MCF 10A (cell line): ENCODE measurements at regions of chr7 and their contacts with region 1.

Region 1: DNA sequence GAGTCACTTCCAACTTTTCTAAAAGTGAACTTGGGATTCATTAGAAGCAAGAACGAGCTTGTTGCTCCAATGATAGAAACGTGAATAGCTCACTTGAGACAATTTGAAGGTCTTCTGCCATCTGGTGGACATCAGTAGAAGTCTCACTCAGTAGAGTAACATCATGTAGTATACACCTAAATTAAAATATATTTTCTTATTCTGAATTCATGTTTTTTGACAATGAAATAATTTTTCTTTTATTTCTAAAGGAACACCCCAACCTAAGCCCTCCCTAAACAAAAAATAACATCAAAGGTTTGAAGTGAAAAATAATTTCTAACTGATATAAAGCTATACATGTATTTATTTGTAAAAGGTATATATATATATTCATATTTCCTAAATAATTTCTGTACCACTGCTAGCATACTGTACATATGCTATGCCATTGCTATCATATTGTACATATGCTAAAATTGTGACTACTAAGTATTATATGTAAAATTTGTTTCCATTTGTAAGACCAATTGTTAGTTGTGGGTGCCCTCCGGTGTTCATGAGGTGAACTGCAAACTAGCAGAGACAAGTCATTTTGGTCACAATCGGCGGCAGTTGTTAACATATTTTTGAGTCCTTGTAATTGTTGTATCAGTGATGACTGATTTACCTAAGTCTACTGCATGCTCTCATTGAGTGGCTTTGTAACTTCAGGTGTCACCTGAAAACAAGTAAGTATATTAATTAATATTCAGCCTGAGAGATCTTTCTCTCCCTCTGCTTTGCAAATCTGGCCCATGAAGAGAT is 121.9 kb downstream of the PTPRZ1 start:
- DNase-seq: peak; percentile 86
- H3K4me3 Mint-ChIP-seq: no peak overlapping the region
- H3K27ac Mint-ChIP-seq: no peak overlapping the region
- H3K4me1 Mint-ChIP-seq: no peaks in the 10 kb centered on the region
- H3K27me3 Mint-ChIP-seq: no peaks in the 10 kb centered on the region
- CTCF ChIP-seq: peak; percentile 67

Region 2: GRCh38 chr7:120792091-120792860 is 1202.5 kb before region 1 on chr7:
- CTCF ChIA-PET with region 1: no interaction called
- POLR2A ChIA-PET with region 1: no interaction called
- intact Hi-C with region 1: loop called (anchors 10 kb)
- DNase-seq: peak; percentile 76
- H3K4me3 Mint-ChIP-seq: no peak overlapping the region
- H3K27ac Mint-ChIP-seq: no peak overlapping the region
- H3K4me1 Mint-ChIP-seq: peaks cover 11% of the 10 kb centered on the region
- H3K27me3 Mint-ChIP-seq: peaks cover 27% of the 10 kb centered on the region
- CTCF ChIP-seq: peak; percentile 84

Region 3: DNA sequence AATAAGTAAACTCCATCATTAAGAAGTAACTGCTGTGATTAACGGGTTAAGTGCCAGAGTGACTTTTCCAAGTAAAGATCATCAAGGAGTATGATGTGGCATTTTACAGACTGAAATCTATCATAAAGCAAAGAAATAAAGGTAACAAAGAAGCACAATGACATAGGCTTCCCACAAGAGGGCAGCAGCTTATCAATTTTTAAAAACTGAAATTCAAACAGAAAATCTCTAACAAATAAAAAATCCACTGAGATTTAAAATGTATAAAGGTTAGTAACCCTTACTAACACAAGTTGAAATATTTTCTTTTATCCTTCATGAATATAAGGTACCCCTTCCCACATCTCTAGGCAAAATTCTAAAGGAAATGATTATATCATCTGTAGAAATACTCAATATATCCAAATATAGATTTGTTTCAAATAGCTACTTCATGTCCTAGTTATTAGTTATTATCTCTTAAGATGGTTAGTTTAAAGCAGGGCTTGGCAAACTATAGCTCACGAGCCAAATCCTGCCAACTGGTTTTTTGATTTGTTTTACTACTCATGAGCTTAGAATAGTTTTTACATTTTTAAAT is 627.9 kb before region 1 on chr7:
- CTCF ChIA-PET with region 1: interaction called, 52 read pairs
- POLR2A ChIA-PET with region 1: interaction called, 7 read pairs
- intact Hi-C with region 1: loop called (anchors 1 kb)
- DNase-seq: peak; percentile 37
- H3K4me3 Mint-ChIP-seq: no peak overlapping the region
- H3K27ac Mint-ChIP-seq: peak overlapping the region; percentile 39
- H3K4me1 Mint-ChIP-seq: peaks cover 7% of the 10 kb centered on the region
- H3K27me3 Mint-ChIP-seq: no peaks in the 10 kb centered on the region
- CTCF ChIP-seq: peak; percentile 72

Region 4: GRCh38 chr7:121558288-121558687 is 436.5 kb before region 1 on chr7:
- CTCF ChIA-PET with region 1: interaction called, 14 read pairs
- POLR2A ChIA-PET with region 1: no interaction called
- intact Hi-C with region 1: no loop called
- DNase-seq: no peak
- H3K4me3 Mint-ChIP-seq: no peak overlapping the region
- H3K27ac Mint-ChIP-seq: no peak overlapping the region
- H3K4me1 Mint-ChIP-seq: no peaks in the 10 kb centered on the region
- H3K27me3 Mint-ChIP-seq: no peaks in the 10 kb centered on the region
- CTCF ChIP-seq: no peak

Region 5: DNA sequence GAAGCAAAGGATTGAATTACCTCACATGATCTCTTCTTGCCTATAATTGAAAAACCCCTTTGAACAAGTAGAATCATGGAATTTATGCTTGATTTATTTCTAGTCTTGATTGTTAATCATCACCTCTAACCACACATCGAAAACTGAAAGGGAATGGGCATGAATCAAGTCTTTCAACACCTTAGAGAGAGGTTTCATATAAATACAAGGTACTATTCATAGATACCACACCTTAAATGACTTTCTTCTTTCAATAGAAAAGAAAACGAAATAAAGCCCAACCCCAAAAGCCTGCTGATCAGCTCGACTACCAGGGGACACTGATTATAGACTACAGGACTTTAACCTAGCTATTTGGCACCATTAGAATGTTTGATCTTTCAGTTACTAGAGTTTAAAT is 250.5 kb before region 1 on chr7:
- CTCF ChIA-PET with region 1: interaction called, 112 read pairs
- POLR2A ChIA-PET with region 1: interaction called, 5 read pairs
- intact Hi-C with region 1: no loop called
- DNase-seq: peak; percentile 62
- H3K4me3 Mint-ChIP-seq: no peak overlapping the region
- H3K27ac Mint-ChIP-seq: peak overlapping the region; percentile 53
- H3K4me1 Mint-ChIP-seq: peaks cover 30% of the 10 kb centered on the region
- H3K27me3 Mint-ChIP-seq: no peaks in the 10 kb centered on the region
- CTCF ChIP-seq: no peak

Region 6: GRCh38 chr7:121872831-121873288 is 122.0 kb before region 1 on chr7 and contains the start of gene PTPRZ1:
- CTCF ChIA-PET with region 1: interaction called, 20 read pairs
- POLR2A ChIA-PET with region 1: interaction called, 7 read pairs
- intact Hi-C with region 1: loop called (anchors 5 kb)
- DNase-seq: peak; percentile 16
- H3K4me3 Mint-ChIP-seq: peak within 1 kb of the TSS; percentile 86
- H3K27ac Mint-ChIP-seq: peak within 1 kb of the TSS; percentile 74
- H3K4me1 Mint-ChIP-seq: no peaks in the 10 kb centered on the region
- H3K27me3 Mint-ChIP-seq: no peaks in the 10 kb centered on the region
- CTCF ChIP-seq: no peak
- total RNA-seq, gene PTPRZ1: 9.8 and 11.1 TPM in 2 replicates

Region 7: DNA sequence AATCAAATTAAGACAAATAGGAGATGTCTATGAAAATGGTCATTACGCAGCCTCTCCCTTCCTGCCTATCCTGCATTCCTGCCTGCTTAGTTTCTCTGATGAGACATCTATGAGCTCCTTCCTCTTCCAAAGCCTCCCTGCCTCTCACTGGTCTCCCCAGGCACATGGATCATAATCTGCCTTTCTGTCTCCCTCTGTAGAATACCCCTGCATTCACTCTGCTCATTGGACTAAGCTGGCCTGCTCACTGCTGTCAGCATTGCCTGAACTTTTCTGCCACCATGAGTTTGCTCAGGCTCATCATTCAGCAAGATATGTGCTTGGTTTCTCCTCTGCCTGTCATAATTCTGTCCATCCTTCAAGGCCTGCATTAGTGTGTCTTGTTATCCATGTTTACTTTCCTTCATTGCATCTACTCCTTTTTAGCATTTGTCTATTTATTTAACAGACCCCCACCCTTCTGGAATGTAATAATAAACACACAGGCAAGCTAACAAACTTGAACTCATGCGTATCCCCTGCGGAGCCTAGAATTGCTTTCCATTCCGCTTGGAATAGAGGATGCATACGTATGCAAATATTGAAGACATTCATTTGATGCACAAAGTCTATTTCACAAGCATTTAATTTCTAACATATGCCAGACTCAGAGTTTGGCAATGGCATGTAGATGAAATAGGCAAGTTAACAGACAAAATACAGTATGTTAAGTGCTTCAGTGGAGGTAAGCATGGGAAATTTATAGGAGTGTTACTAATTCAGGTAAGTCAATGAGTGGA is 33.5 kb before region 1 on chr7:
- CTCF ChIA-PET with region 1: interaction called, 39 read pairs
- POLR2A ChIA-PET with region 1: interaction called, 3 read pairs
- intact Hi-C with region 1: no loop called
- DNase-seq: peak; percentile 82
- H3K4me3 Mint-ChIP-seq: peak overlapping the region; percentile 11
- H3K27ac Mint-ChIP-seq: peak overlapping the region; percentile 83
- H3K4me1 Mint-ChIP-seq: peaks cover 12% of the 10 kb centered on the region
- H3K27me3 Mint-ChIP-seq: no peaks in the 10 kb centered on the region
- CTCF ChIP-seq: peak; percentile 24